ENCODE measurements at regions of chr11 and their contacts with region 1.

Region 1: DNA sequence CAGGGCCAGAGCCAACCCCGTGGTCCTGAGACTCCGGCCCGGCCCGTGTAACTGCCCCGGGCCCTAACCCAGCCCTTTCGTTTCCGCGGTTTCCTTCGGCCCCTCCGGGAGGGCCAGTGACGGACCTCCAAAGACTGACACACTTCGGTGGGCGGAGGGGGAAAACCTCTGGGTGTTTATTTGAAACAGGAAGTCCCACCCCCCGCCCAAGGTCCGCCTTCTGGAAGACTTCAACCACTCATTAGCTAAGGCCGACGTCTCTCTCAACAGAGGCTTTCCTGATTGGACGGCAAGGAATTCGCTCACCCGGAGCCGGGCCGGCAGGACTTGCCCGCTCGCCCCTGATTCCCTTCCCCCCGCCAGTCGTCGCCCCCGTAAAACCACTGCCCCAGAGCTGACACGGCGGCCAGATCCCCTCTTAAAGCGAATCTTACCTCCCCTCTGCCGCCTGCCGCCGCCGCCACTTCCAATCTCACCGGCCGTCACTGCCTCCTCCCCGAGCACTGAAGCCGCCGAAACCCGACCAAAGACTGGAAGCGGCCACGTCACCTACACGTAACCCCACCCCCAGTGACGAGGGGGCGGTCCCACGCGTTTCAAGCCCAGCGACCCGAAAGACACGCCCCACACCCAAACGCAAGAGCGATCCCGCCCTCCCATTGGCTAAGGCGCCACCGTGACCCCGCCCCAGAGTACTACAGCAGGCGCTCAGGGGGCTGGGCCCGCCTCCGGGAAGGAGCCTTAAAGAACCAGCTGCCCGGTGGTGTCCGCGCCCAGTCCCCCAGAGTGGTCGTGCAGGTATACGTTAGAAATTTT is at the start of gene STX5:
- H3K4me3 ChIP-seq: peak within 1 kb of the TSS; percentile 87
- H3K27ac ChIP-seq: peak within 1 kb of the TSS; percentile 88
- H3K4me1 ChIP-seq: peaks cover 2% of the 10 kb centered on the region; the same call in 1 of the 2 replicates
- CTCF ChIP-seq: no peak

Region 2: GRCh38 chr11:62705880-62706849 is 125.6 kb before region 1 on chr11:
- CTCF ChIA-PET with region 1: no interaction called
- POLR2A ChIA-PET with region 1: interaction called, 18 read pairs
- H3K4me3 ChIP-seq: peak overlapping the region; percentile 62
- H3K27ac ChIP-seq: peak overlapping the region; percentile 62
- H3K4me1 ChIP-seq: peaks cover 3% of the 10 kb centered on the region; the same call in 1 of the 2 replicates
- CTCF ChIP-seq: no peak

Region 3: DNA sequence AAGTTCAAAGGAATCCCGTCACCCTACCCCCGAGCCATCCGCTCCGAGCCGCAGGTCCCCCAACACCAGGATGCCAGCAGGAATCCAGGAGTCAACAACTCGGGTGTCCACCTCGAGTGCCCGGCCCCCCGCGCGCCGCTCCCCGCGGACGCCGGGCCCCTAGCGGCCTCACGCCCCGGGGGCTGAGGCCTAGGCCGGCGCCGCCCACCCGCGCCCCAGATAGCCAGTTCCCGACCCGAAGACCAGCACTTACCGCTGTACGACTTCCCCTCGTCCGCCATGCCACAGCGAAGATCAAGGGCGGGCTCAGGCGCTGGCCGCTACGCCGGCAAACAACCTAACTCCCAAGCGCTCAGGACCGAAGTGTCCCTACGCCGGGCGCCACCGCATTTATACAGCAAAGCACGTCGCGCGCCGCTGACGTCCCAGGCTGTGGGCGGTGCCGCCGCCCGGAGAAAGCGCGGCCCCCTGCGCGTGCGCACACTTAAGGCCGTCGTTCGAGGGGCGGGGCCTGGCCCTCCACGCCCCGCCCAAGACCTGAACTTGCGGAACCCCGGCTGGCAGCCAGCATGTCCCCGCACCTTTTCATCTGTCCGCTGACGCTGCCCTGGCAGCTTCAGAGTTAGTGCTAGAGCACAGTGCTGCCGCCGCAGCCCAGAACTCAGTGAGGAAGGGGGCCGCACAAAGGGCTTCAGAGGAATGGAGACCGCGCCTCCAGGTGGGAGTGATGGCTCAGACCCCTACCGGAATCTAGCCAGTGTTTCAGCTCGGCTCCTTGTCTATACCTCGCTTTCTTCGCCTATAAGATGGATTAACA is 26.4 kb before region 1 on chr11 and contains the start of gene NXF1:
- CTCF ChIA-PET with region 1: interaction called, 4 read pairs
- POLR2A ChIA-PET with region 1: interaction called, 18 read pairs
- H3K4me3 ChIP-seq: peak within 1 kb of the TSS; percentile 84
- H3K27ac ChIP-seq: peak within 1 kb of the TSS; percentile 63
- H3K4me1 ChIP-seq: no peaks in the 10 kb centered on the region
- CTCF ChIP-seq: no peak

Region 4: DNA sequence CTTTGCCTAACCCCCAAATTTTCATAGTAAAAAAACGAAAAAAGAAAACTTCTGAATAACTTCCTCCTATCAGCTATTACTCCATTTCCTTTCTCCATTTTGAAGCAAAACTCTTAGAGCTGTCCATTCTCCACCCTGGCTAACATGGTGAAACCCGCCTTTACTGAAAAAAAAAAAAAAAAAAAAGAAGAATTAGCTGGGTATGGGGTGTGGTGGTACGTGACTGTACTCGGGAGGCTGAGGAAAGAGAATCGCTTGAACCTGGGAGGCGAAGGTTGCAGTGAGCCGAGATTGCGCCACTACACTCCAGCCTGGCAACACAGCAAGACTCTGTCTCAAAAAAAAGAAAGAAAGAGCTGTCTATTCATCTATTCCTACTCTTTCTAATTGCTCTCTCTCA is 15.2 kb before region 1 on chr11:
- CTCF ChIA-PET with region 1: interaction called, 5 read pairs
- POLR2A ChIA-PET with region 1: interaction called, 14 read pairs
- H3K4me3 ChIP-seq: no peak overlapping the region
- H3K27ac ChIP-seq: no peak overlapping the region
- H3K4me1 ChIP-seq: no peaks in the 10 kb centered on the region
- CTCF ChIP-seq: no peak

Region 5: GRCh38 chr11:62855571-62856332 is 24.0 kb after region 1 on chr11:
- CTCF ChIA-PET with region 1: no interaction called
- POLR2A ChIA-PET with region 1: interaction called, 43 read pairs
- H3K4me3 ChIP-seq: peak overlapping the region; percentile 88
- H3K27ac ChIP-seq: peak overlapping the region; percentile 82
- H3K4me1 ChIP-seq: no peaks in the 10 kb centered on the region
- CTCF ChIP-seq: no peak

Region 6: DNA sequence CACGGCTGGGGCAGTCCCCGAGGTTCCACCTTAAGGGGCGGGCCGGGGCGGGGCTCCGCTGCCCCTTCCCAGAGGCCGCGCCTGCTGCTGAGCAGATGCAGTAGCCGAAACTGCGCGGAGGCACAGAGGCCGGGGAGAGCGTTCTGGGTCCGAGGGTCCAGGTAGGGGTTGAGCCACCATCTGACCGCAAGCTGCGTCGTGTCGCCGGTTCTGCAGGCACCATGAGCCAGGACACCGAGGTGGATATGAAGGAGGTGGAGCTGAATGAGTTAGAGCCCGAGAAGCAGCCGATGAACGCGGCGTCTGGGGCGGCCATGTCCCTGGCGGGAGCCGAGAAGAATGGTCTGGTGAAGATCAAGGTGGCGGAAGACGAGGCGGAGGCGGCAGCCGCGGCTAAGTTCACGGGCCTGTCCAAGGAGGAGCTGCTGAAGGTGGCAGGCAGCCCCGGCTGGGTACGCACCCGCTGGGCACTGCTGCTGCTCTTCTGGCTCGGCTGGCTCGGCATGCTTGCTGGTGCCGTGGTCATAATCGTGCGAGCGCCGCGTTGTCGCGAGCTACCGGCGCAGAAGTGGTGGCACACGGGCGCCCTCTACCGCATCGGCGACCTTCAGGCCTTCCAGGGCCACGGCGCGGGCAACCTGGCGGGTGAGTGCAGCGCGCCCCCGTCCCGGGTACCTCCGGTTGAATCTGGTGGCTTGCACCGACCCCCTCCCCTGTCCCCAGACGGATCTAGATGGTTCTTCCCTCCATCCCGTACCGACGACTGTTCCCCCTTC is 49.3 kb after region 1 on chr11 and contains the start of gene SLC3A2:
- CTCF ChIA-PET with region 1: interaction called, 3 read pairs
- POLR2A ChIA-PET with region 1: interaction called, 10 read pairs
- H3K4me3 ChIP-seq: peak within 1 kb of the TSS; percentile 93
- H3K27ac ChIP-seq: peak within 1 kb of the TSS; percentile 98
- H3K4me1 ChIP-seq: no peaks in the 10 kb centered on the region
- CTCF ChIP-seq: peak; percentile 97